ENCODE measurements at regions of chr17 and their contacts with region 1.

Region 1: GRCh38 chr17:73998653-73999645 is 204.5 kb upstream of the RPL38 start:
- DNase-seq: peak; percentile 82
- H3K4me3 ChIP-seq: peak overlapping the region in 1 of 2 experiments; percentile 23; a peak in 1 of 4 replicates
- H3K27ac ChIP-seq: no peak overlapping the region
- H3K4me1 ChIP-seq: no peaks in the 10 kb centered on the region; a peak in 1 of 4 replicates
- H3K27me3 ChIP-seq: no peaks in the 10 kb centered on the region
- CTCF ChIP-seq: peak; percentile 25; the same call in 1 of the 2 replicates
- EP300 ChIP-seq: no peak
- RAD21 ChIP-seq: peak; percentile 73

Region 2: GRCh38 chr17:73595479-73595878 is 403.5 kb before region 1 on chr17:
- CTCF ChIA-PET with region 1: interaction called, 11 read pairs
- POLR2A ChIA-PET with region 1: no interaction called
- DNase-seq: peak; percentile 96
- H3K4me3 ChIP-seq: no peak overlapping the region
- H3K27ac ChIP-seq: no peak overlapping the region
- H3K4me1 ChIP-seq: peaks cover 0 to 36% of the 10 kb centered on the region in 2 experiments; a peak in 1 of 4 replicates
- H3K27me3 ChIP-seq: no peaks in the 10 kb centered on the region
- CTCF ChIP-seq: 0 out of 2 replicates have a peak, but pooled peaks have one; percentile 19
- EP300 ChIP-seq: peak in 1 of 2 experiments; percentile 81; a peak in 2 of 4 replicates
- RAD21 ChIP-seq: peak; percentile 82

Region 3: GRCh38 chr17:73976676-73977521 is 22.1 kb before region 1 on chr17:
- CTCF ChIA-PET with region 1: interaction called, 25 read pairs
- POLR2A ChIA-PET with region 1: no interaction called
- DNase-seq: peak; percentile 61
- H3K4me3 ChIP-seq: no peak overlapping the region
- H3K27ac ChIP-seq: no peak overlapping the region
- H3K4me1 ChIP-seq: peaks cover 0 to 29% of the 10 kb centered on the region in 2 experiments; a peak in 1 of 4 replicates
- H3K27me3 ChIP-seq: no peaks in the 10 kb centered on the region
- CTCF ChIP-seq: no peak
- EP300 ChIP-seq: no peak
- RAD21 ChIP-seq: no peak

Region 4: GRCh38 chr17:73984941-73985340 is 14.0 kb before region 1 on chr17:
- CTCF ChIA-PET with region 1: interaction called, 41 read pairs
- POLR2A ChIA-PET with region 1: no interaction called
- DNase-seq: no peak
- H3K4me3 ChIP-seq: no peak overlapping the region
- H3K27ac ChIP-seq: no peak overlapping the region
- H3K4me1 ChIP-seq: no peaks in the 10 kb centered on the region; a peak in 1 of 4 replicates
- H3K27me3 ChIP-seq: no peaks in the 10 kb centered on the region
- CTCF ChIP-seq: no peak
- EP300 ChIP-seq: no peak
- RAD21 ChIP-seq: no peak

Region 5: DNA sequence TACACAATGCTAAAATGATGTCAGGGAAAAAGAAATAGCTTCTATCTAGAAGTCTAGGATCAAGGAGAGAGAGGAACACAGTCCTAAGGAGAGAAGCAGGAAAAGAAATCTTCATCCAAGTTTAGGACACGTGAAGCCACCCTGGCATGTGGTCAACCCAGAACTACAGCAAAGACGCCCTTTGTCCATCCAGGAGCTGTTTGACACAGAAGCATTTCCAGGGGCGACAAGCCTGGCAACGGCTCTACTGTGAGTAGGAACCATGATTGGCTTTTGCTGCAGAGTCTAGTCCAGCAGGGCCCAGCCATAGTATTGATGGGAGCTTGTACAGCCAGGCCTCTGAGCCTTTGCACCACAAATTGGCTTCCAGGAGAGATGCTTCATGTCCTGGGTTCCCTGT is 19.2 kb after region 1 on chr17:
- CTCF ChIA-PET with region 1: interaction called, 10 read pairs
- POLR2A ChIA-PET with region 1: no interaction called
- DNase-seq: no peak
- H3K4me3 ChIP-seq: no peak overlapping the region
- H3K27ac ChIP-seq: no peak overlapping the region
- H3K4me1 ChIP-seq: peaks cover 0 to 2% of the 10 kb centered on the region in 2 experiments; a peak in 1 of 4 replicates
- H3K27me3 ChIP-seq: no peaks in the 10 kb centered on the region
- CTCF ChIP-seq: no peak
- EP300 ChIP-seq: no peak
- RAD21 ChIP-seq: no peak